Mammary epithelial cell (primary cell): ENCODE measurements at regions of chr5 and their contacts with region 1.

Region 1: DNA sequence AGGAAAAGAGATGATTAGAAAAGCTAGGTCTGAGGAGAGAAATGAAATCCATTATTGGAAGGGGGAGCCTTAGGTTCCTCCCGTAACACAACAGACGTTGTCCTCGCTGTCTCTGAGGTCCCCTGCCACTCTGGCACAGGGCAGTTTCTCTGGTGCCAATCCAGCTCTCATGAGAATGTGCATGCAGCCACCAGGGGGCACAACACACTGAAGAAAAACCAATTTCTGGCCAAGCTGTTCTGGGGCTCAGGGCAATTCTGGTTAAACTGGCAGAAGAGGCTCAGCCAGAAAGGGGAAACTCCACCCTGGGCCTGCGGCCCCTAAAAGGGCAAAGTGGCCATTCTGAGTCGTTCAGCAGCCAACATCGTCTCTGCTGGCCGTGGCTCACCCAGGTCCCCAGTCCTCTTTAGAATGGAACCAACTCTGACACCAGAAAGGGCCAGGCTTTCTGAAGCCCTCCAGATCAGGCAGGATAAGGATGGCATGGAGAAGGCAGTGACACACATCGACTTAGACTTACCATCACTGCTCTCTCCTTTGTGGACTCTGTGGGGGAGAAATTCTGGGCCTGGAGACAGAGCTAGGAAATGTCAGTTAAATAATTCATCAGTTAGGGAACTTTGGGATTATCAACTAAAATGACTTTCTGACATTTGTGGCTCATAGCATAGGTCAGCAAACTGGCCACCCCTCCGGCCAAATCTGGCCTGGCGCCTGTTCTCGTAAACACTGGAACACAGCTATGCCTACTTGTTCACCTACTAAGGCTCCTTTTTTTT is 58.5 kb upstream of the GOLPH3 start:
- DNase-seq: peak; percentile 55
- H3K4me3 ChIP-seq: no peak overlapping the region
- H3K27ac ChIP-seq: no peak overlapping the region
- H3K4me1 ChIP-seq: peaks cover 14% of the 10 kb centered on the region
- H3K27me3 ChIP-seq: no peaks in the 10 kb centered on the region
- CTCF ChIP-seq: peak; percentile 78 to 84

Region 2: DNA sequence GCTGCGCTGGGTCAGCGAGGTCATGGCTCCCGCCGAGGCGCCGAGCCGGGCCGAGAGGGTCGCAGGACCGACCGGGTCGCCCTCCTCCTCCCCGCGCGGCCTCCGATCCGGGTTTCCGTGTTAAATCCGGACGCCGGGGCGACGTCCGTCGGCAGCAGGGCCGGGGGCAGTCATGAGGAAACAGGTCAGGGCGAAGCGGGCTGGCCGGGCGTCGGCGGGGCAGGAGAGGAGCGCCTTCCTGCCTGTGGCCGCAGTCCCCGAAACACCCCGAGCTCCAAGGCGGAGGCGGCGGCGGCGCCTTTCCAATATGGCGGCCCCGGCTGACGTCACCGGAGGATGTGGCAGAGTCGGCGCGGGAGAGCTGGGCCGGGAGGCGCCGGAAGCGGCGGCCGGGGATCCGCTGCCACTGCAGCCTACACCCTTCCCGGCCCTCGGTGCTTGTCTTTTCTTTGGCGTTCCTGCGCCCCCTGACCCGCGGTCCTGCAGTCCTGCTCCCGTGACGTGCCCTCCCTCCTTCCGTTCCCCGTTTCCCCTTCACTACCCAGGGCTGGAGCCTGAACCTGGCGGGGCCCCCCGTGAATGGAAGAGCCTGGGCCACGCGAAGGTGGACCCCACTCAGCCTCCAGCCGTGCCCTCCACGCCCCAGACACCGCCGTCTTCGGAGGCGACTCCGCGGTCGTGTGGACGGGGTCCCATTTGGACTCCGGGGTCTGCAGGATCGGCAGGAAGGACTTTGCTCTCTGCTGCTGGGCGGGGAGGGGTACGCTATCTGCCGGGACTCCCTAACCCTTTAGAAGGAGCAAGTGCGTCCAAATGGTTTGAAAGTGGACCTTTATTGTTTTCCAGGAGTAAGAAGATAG is 58.4 kb before region 1 on chr5 and contains the start of gene GOLPH3:
- CTCF ChIA-PET with region 1: no interaction called
- dilution Hi-C with region 1: loop called (anchors 5 kb)
- in situ Hi-C with region 1: no loop called
- intact Hi-C with region 1: loop called (anchors 5 kb)
- DNase-seq: peak; percentile 88
- H3K4me3 ChIP-seq: peak within 1 kb of the TSS; percentile 75 to 99 (median 83)
- H3K27ac ChIP-seq: peak within 1 kb of the TSS; percentile 83
- H3K4me1 ChIP-seq: peaks cover 19% of the 10 kb centered on the region
- H3K27me3 ChIP-seq: no peaks in the 10 kb centered on the region
- CTCF ChIP-seq: no peak
- total RNA-seq, gene GOLPH3: 61.7 to 67.7 TPM

Region 3: GRCh38 chr5:32202394-32202793 is 30.2 kb before region 1 on chr5:
- CTCF ChIA-PET with region 1: no interaction called
- dilution Hi-C with region 1: no loop called
- in situ Hi-C with region 1: no loop called
- intact Hi-C with region 1: no loop called
- DNase-seq: no peak
- H3K4me3 ChIP-seq: no peak overlapping the region
- H3K27ac ChIP-seq: no peak overlapping the region
- H3K4me1 ChIP-seq: no peaks in the 10 kb centered on the region
- H3K27me3 ChIP-seq: no peaks in the 10 kb centered on the region
- CTCF ChIP-seq: no peak

Region 4: DNA sequence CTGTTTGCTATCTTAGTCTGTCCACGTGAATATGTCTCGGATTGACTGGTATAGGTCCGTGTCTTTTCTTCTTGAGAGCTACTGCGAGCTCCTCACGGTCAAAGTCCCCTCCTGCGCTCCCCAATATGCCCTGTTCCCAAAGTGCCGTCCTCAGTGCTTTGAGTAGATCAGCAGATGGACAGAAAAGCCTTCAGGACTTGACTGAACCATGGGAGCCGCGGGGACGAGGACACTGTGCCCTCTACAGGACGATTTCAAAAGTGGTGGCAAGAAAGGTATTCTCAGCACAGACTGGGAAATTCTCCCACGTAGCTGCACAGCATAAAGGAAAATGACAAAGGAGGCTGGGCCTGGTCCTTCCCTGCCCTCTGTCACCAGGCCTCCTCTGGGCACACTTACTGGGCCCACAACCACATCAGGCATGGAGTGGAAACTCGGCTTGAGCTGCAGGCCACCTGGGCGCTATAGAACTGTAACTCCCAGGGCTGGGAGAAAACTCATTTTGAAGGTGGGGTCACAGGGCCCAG is 96.7 kb after region 1 on chr5:
- CTCF ChIA-PET with region 1: no interaction called
- dilution Hi-C with region 1: no loop called
- in situ Hi-C with region 1: no loop called
- intact Hi-C with region 1: loop called (anchors 1 kb)
- DNase-seq: peak; percentile 41
- H3K4me3 ChIP-seq: no peak overlapping the region
- H3K27ac ChIP-seq: no peak overlapping the region
- H3K4me1 ChIP-seq: peaks cover 11% of the 10 kb centered on the region
- H3K27me3 ChIP-seq: no peaks in the 10 kb centered on the region
- CTCF ChIP-seq: peak; percentile 63 to 73

Region 5: DNA sequence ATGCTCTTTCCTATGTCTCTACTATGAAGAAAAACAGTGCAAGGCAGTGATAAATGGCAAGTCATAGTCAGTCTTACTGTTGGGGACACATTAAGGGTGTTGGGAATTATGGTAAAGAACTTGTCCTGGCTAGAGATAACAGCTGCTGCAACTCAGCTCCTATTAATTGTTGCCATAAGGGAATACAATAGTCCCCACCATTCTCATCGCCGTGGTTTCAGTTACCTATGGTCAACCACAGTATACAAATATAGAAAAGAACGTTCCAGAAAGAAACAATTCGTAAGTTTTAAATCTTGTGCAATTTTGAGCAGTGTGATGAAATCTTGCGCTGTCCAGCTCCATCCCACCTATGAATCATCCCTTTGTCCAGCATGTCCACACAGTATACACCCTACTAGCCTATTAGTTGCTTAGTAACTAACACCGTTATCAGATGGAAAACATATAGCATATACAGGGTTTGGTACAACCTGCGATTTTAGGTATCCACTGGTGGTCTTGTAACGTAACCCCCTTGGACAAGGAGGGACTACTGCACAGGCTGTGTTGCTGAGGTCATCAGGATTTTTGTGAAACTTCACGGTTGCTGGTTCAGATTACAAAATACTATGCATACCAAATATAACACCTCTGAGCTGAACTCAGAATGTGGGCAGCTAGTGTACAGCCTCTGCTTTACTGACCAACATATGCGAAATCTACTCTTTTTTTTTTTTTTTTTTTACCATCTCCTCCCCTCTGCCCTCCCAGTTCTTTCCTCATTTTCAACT is 158.4 kb after region 1 on chr5:
- CTCF ChIA-PET with region 1: no interaction called
- dilution Hi-C with region 1: no loop called
- in situ Hi-C with region 1: no loop called
- intact Hi-C with region 1: loop called (anchors 5 kb)
- DNase-seq: peak; percentile 88
- H3K4me3 ChIP-seq: no peak overlapping the region
- H3K27ac ChIP-seq: peak overlapping the region; percentile 75
- H3K4me1 ChIP-seq: peaks cover 12% of the 10 kb centered on the region
- H3K27me3 ChIP-seq: no peaks in the 10 kb centered on the region
- CTCF ChIP-seq: no peak

Region 6: DNA sequence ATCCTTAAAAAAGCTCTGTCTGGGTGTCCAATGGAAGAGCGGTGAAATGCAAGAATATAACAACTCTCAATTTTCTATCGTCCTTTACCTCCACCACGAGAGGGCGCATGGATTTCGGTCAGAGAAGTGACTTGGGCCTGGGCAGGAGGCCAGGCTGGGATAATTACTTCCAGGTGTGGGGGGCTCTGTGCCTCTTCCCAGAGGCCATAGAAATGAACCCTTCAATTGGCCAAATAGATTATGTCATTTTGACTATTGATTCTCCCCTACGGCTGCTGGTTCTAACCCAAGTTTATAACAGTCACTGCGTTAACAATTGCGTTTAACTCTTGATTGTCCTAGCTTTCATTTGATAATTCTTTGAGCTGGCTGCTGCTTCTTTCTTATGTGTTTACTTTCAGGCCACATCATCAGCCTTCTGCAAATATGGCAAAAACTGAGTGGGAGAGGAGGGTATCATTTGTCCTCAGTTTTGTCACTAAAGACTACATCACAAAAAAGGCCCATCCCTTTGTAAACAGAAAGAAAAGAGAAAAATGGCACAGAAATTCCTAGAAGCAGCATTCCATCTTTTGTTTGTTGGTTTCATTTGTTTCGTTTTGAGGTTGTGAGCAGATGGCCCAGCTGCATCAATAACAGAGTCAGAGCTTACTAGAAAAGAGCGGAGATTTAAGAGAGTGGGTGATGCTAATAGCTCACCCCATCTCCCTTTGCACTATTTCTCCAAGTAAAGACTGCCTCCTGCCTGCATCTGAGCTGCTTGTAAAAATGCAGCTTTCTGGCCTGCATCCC is 257.4 kb after region 1 on chr5:
- CTCF ChIA-PET with region 1: no interaction called
- dilution Hi-C with region 1: no loop called
- in situ Hi-C with region 1: no loop called
- intact Hi-C with region 1: loop called (anchors 5 kb)
- DNase-seq: peak; percentile 33
- H3K4me3 ChIP-seq: no peak overlapping the region
- H3K27ac ChIP-seq: no peak overlapping the region
- H3K4me1 ChIP-seq: no peaks in the 10 kb centered on the region
- H3K27me3 ChIP-seq: no peaks in the 10 kb centered on the region
- CTCF ChIP-seq: peak; percentile 67 to 72

Region 7: GRCh38 chr5:32585446-32586275 is 353.0 kb after region 1 on chr5 and contains the start of gene SUB1:
- CTCF ChIA-PET with region 1: interaction called, 3 read pairs
- dilution Hi-C with region 1: no loop called
- in situ Hi-C with region 1: no loop called
- intact Hi-C with region 1: loop called (anchors 1 kb)
- DNase-seq: peak; percentile 85
- H3K4me3 ChIP-seq: peak within 1 kb of the TSS; percentile 89 to 97 (median 93)
- H3K27ac ChIP-seq: peak within 1 kb of the TSS; percentile 81
- H3K4me1 ChIP-seq: peaks cover 20% of the 10 kb centered on the region
- H3K27me3 ChIP-seq: no peaks in the 10 kb centered on the region
- CTCF ChIP-seq: peak in 1 of 2 donors; percentile 19
- total RNA-seq, gene SUB1: 109 to 231 TPM

Region 8: GRCh38 chr5:32613050-32613672 is 380.5 kb after region 1 on chr5:
- CTCF ChIA-PET with region 1: no interaction called
- dilution Hi-C with region 1: loop called (anchors 25 kb)
- in situ Hi-C with region 1: loop called (anchors 25 kb)
- intact Hi-C with region 1: loop called (anchors 1 kb)
- DNase-seq: peak; percentile 51
- H3K4me3 ChIP-seq: no peak overlapping the region
- H3K27ac ChIP-seq: no peak overlapping the region
- H3K4me1 ChIP-seq: no peaks in the 10 kb centered on the region
- H3K27me3 ChIP-seq: no peaks in the 10 kb centered on the region
- CTCF ChIP-seq: peak; percentile 86 to 88